Activated B cell treated with CpG ODN at 0.5 μM for 24 hours (primary cell): ENCODE measurements at regions of chr11 and their contacts with region 1.

Region 1: DNA sequence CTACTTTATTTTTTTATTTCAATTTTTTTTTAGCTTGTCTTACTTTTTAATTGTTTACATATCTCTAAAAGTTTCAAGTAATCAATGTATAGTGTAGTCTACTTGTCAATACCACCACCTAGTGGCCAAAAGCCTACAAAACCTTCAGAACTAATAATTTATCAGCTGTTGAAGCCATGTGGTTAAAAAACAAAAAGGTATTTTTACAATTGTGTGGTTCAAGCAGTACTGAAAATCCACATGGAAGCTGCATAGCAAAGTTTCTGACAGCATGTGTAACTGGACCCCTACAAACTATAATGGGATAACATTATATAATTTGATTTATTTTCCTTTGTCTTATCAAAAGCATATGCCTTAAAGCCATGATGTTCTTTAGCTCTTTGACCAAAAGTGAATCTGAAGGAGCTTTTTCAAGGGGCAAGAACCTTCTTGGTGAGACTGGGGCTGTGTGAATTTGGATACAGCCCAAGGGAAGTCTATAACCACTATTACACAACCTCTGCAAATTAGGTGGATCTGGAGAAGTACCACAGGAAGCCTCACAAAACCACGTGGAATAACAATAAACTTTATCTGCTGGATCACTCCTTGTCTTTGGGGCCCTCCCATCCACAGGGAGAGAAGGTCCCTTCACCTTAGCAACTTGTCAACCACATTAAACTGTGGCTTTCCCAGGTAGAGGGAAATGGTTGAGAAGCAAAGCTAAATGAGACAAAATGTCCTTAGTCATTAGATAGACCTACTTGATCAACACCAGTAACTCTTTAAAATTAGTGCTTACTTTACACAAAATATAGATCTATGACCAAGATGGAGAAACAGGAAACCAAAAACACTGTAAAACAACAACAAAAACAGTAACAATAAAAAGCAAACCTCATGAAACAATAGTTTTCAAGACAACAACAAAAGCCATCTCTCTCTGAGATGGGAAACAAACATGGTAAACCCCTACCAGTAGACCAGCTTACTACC is 9.9 kb downstream of the NARS2 start:
- DNase-seq: no peak
- ATAC-seq: peak; percentile 67
- H3K4me3 Mint-ChIP-seq: no peak overlapping the region
- H3K27ac Mint-ChIP-seq: no peak overlapping the region
- H3K4me1 Mint-ChIP-seq: peaks cover 37% of the 10 kb centered on the region
- H3K27me3 Mint-ChIP-seq: no peaks in the 10 kb centered on the region
- CTCF ChIP-seq: no peak

Region 2: GRCh38 chr11:77530879-77531278 is 1033.9 kb before region 1 on chr11:
- CTCF ChIA-PET with region 1: no interaction called
- POLR2A ChIA-PET with region 1: no interaction called
- intact Hi-C with region 1: no loop called
- DNase-seq: no peak
- ATAC-seq: no peak
- H3K4me3 Mint-ChIP-seq: no peak overlapping the region
- H3K27ac Mint-ChIP-seq: no peak overlapping the region
- H3K4me1 Mint-ChIP-seq: peaks cover 4% of the 10 kb centered on the region
- H3K27me3 Mint-ChIP-seq: no peaks in the 10 kb centered on the region
- CTCF ChIP-seq: no peak

Region 3: GRCh38 chr11:78000193-78000592 is 564.6 kb before region 1 on chr11:
- CTCF ChIA-PET with region 1: interaction called, 7 read pairs
- POLR2A ChIA-PET with region 1: no interaction called
- intact Hi-C with region 1: loop called (anchors 1 kb)
- DNase-seq: no peak
- ATAC-seq: peak; percentile 52
- H3K4me3 Mint-ChIP-seq: no peak overlapping the region
- H3K27ac Mint-ChIP-seq: peak overlapping the region; percentile 84
- H3K4me1 Mint-ChIP-seq: peaks cover 28% of the 10 kb centered on the region
- H3K27me3 Mint-ChIP-seq: peaks cover 2% of the 10 kb centered on the region
- CTCF ChIP-seq: no peak

Region 4: DNA sequence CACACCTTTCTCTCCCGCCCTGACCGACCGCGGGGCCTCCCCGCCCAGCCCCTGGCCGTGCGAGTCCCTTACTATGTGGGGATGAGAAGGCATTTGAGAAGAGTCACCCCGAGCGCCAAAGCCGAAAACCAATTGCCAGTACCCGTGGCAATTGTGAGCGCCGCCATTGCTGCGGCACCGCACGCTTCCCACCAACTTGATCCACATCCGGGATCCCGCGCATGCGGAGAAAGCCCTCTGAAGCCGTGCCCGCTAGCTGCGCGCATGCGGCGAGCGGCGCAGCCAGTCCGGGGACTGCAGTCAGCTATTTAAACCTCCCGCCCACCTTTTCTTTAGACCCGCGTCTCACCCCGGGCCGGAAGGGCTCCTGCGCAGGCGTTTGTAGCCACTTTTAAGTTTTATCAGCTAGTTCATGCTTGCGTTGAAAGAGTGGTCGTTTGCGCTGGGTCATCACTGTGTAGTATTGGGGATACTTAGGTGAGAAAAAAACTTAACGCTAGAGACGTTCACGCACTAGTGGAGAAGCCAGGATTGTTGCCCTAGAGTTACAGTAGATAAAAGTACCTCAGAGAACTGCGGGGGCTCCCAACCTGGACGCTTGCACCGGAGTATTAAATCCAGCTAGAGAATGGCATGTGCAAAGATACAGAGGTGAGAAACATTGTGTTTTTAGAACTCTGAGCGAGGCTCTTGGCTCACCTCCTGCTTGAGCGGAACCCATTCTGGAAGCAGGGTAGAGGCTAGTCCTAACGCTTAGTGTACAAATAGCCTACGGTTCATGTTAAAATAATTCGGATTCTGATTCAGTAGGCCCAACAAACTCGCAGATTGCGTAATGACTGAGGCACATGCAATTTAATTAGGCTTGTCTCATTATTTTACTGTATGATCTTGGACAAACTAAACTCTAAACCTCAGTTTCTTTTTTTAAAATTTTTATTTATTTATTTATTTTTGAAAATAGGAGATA is 425.1 kb before region 1 on chr11 and contains the start of gene ALG8:
- CTCF ChIA-PET with region 1: interaction called, 14 read pairs
- POLR2A ChIA-PET with region 1: interaction called, 8 read pairs
- intact Hi-C with region 1: no loop called
- DNase-seq: peak; percentile 94
- ATAC-seq: peak; percentile 94
- H3K4me3 Mint-ChIP-seq: peak within 1 kb of the TSS; percentile 95
- H3K27ac Mint-ChIP-seq: peak within 1 kb of the TSS; percentile 92
- H3K4me1 Mint-ChIP-seq: peaks cover 49% of the 10 kb centered on the region
- H3K27me3 Mint-ChIP-seq: no peaks in the 10 kb centered on the region
- CTCF ChIP-seq: no peak
- total RNA-seq, gene ALG8: 42.8 and 46.0 TPM in 2 replicates

Region 5: DNA sequence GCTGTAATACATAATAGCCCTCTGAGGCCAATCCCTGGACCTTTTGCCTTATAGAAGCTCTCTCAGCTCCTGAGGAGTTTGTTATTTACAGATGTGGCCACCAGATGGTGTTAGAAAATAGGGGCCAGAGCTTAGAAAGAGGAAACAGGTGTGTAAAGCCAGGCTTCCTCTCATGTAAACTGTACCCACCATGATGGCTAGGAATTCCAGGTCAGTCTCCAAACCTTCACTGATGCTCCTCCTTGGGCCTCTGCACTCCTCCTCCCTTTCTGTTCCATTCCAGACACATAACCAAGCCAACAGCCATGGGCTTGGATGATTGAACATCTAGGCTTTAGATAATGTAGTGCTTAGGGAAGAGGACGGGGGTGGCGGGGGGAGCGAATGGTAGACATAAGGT is 336.3 kb before region 1 on chr11:
- CTCF ChIA-PET with region 1: interaction called, 112 read pairs
- POLR2A ChIA-PET with region 1: interaction called, 6 read pairs
- intact Hi-C with region 1: loop called (anchors 1 kb)
- DNase-seq: no peak
- ATAC-seq: peak; percentile 66
- H3K4me3 Mint-ChIP-seq: no peak overlapping the region
- H3K27ac Mint-ChIP-seq: no peak overlapping the region
- H3K4me1 Mint-ChIP-seq: peaks cover 42% of the 10 kb centered on the region
- H3K27me3 Mint-ChIP-seq: no peaks in the 10 kb centered on the region
- CTCF ChIP-seq: no peak

Region 6: DNA sequence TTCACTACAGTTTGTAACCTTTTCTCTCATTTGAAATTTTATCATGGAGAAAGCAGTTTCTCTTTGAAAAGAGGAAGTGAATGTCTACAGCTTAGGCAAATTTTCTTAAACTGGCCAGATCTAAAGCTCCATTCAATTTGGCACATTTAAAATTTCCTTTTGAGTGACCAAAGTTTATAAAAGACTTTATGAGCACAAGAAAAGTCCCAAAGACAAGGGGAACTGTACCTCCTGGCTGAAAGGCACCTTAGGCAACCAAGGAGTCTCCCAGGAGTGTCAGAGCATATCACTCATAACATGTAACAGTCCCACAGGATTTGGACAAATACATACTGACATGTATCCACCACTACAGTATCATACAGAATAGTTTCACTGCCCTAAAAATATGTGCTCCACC is 31.4 kb before region 1 on chr11:
- CTCF ChIA-PET with region 1: interaction called, 13 read pairs
- POLR2A ChIA-PET with region 1: no interaction called
- intact Hi-C with region 1: no loop called
- DNase-seq: no peak
- ATAC-seq: peak; percentile 67
- H3K4me3 Mint-ChIP-seq: peak overlapping the region; percentile 58
- H3K27ac Mint-ChIP-seq: peak overlapping the region; percentile 96
- H3K4me1 Mint-ChIP-seq: peaks cover 36% of the 10 kb centered on the region
- H3K27me3 Mint-ChIP-seq: no peaks in the 10 kb centered on the region
- CTCF ChIP-seq: no peak